Activated T-helper 1 cell treated with anti-CD3 and anti-CD28 coated beads, Interleukin-12 subunit alpha, Interleukin-12 subunit beta, Interleukin-2, Interleukin-4 antibody, amounts not matched to agents 30 ng/mL and 10 ng/mL and 1 ng/mL, durations not matched to agents 14 hours and 24 hours and 36 hours (primary cell): ENCODE measurements at regions of chr3 and their contacts with region 1.

Region 1: GRCh38 chr3:27800261-27800660 is 78.1 kb upstream of the EOMES start:
- DNase-seq: no peak
- H3K4me3 Mint-ChIP-seq: no peak overlapping the region
- H3K27ac Mint-ChIP-seq: peak overlapping the region; percentile 0
- H3K4me1 Mint-ChIP-seq: peaks cover 17% of the 10 kb centered on the region
- H3K27me3 Mint-ChIP-seq: no peaks in the 10 kb centered on the region

Region 2: DNA sequence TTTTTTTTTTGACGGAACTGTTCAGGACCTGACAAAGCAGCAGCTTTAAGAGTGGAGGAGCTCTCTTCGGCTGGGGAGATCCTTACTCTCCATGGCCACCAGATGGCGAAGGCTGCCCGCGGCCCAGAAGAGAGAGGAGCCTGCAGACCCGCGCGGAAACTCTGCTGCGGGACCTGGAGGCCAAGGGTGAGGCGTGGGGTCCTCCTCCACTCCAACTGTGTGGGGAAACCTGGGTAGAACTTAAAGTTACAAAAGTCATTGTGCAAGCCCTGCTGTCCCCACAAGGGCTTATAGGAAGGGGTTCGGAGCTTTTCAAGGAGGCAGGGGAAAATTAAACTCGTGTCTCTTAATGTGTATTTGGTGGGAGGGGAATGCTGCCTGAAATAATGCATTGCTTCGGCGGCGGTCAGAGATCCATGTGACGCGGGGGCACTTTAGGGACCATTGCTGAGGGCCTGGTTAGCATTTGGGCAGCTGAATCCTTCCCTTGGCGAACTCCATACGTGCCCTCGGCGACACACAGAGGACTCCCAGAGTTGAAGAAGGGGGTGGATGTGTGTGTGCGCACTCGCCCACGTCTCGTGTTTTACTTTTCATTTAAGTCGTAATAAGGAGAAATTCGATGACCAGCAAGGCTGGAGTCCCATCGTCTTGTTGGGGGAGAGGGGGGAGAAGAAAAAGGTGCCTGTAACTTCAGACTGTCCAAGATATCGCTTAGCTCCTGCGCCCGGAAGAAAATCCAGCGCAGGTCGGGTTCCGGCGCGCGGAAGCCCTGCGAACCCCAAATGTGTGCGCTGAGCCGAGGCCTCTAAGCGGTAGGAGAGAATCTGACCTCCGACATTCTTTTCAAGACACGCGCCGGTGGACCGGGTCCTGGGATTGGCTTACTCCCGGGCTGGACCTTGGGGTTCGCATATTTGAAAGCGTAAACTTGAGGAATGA is 87.9 kb before region 1 on chr3:
- intact Hi-C with region 1: no loop called
- DNase-seq: peak; percentile 75
- H3K4me3 Mint-ChIP-seq: peak overlapping the region; percentile 90
- H3K27ac Mint-ChIP-seq: peak overlapping the region; percentile 91
- H3K4me1 Mint-ChIP-seq: peaks cover 32% of the 10 kb centered on the region
- H3K27me3 Mint-ChIP-seq: peaks cover 45% of the 10 kb centered on the region

Region 3: DNA sequence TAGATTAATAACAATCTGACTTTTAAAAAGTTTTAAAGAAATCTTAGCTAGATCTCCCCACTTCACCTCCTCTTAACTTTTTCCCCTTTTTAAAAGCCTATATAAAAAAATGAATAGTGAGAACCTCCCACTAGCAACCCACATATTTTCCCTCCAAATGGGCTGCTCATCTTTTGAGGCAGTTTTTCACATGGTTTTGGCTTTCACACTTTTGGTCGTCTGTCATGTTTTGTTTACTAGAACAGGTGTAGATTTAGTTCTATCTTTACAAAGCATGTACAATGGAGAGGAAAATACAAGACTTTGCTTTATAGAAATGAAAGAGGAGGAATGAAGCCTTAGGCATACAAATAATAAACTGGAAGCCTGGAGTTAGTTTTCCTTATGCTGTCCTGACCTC is 48.6 kb after region 1 on chr3:
- intact Hi-C with region 1: loop called (anchors 2 kb)
- DNase-seq: no peak
- H3K4me3 Mint-ChIP-seq: no peak overlapping the region
- H3K27ac Mint-ChIP-seq: peak overlapping the region; percentile 73
- H3K4me1 Mint-ChIP-seq: peaks cover 19% of the 10 kb centered on the region
- H3K27me3 Mint-ChIP-seq: no peaks in the 10 kb centered on the region